Naive thymus-derived CD4-positive, alpha-beta T cell (primary cell): ENCODE measurements at regions of chr5 and their contacts with region 1.

Region 1: DNA sequence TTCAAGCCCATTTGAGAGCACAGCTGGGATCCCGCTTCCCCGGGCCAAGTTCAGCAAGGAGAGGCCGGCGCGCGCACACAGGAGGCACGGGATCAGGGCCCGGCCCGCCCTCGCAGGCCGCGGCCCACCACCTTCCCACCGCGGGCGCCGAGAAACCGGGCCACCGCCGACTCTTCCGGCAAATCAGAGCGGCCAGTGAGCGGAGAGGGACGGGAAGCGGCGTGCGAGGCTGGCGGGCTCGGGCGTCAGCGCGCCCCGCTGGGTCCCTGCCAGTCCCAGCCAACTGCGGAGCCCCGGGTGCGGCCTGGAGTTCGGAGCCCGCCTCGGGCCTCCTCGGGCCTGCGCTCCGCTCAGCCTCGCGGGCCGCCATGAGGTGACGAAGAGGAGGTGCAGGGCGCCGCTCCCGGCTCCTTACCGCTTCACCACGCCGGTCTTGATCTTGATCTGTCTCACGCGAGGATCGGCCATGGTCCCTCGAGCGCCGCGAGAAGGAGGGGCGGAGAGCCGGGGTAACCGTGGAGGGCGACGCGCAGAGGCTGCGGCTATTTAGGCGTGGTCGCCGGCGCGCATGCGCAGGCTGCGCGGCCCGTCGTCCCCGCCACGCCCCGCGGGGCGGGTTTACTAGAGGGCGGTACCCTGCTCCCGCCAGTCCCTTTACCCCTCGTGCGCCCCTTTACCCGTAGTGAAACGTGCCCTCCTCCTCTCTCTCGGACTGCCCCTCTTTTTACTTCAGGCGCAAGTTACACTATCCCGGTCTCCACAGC is at the start of gene TBCA:
- DNase-seq: peak; percentile 87 to 94 (median 93)
- ATAC-seq: peak; percentile 92
- H3K4me3 ChIP-seq: peak within 1 kb of the TSS; percentile 72
- H3K4me3 Mint-ChIP-seq: peak within 1 kb of the TSS; percentile 90 to 99 (median 94)
- H3K27ac ChIP-seq: peak within 1 kb of the TSS; percentile 97
- H3K27ac Mint-ChIP-seq: peak within 1 kb of the TSS; percentile 96 to 98 (median 97)
- H3K4me1 ChIP-seq: peaks cover 13 to 26% of the 10 kb centered on the region in 2 donors
- H3K4me1 Mint-ChIP-seq: peaks cover 32 to 60% (median 49%) of the 10 kb centered on the region in 7 donors
- H3K27me3 ChIP-seq: no peaks in the 10 kb centered on the region
- H3K27me3 Mint-ChIP-seq: no peaks in the 10 kb centered on the region
- total RNA-seq, gene TBCA: 71.3 to 137 (median 89.3) TPM

Region 2: GRCh38 chr5:77155179-77155785 is 620.7 kb before region 1 on chr5:
- CTCF ChIA-PET with region 1: no interaction called
- POLR2A ChIA-PET with region 1: no interaction called
- intact Hi-C with region 1: loop called in 1 of 2 experiments (anchors 10 kb)
- DNase-seq: peak in 7 of 9 donors; percentile 81 to 94 (median 91)
- ATAC-seq: peak; percentile 96
- H3K4me3 ChIP-seq: no peak overlapping the region
- H3K4me3 Mint-ChIP-seq: peak overlapping the region in 9 of 10 donors; percentile 22 to 83 (median 60)
- H3K27ac ChIP-seq: peak overlapping the region; percentile 67
- H3K27ac Mint-ChIP-seq: peak overlapping the region in 8 of 9 donors; percentile 74 to 99 (median 96)
- H3K4me1 ChIP-seq: peaks cover 0 to 27% of the 10 kb centered on the region in 2 donors
- H3K4me1 Mint-ChIP-seq: peaks cover 17 to 40% (median 33%) of the 10 kb centered on the region in 7 donors
- H3K27me3 ChIP-seq: no peaks in the 10 kb centered on the region
- H3K27me3 Mint-ChIP-seq: peaks cover 0 to 12% (median 3%) of the 10 kb centered on the region in 5 donors

Region 3: DNA sequence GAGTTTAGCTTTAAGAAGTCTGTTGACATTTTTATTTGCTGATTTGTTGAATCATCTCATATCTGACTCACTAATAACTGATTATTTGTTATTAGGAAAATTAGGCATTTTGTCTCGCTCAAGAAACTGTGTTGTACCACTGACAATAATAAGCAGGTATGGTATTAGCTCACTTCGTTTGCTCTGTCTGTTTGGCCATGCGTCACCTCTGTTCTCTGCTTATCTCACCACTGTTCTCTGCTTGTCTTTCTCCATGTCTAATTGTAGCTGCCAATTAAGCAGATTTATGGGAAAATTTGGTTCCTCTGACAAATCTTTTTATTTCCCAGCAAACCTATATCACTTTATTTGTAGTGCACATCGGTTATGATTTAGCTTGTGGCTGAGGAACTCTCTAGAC is 422.7 kb before region 1 on chr5:
- CTCF ChIA-PET with region 1: no interaction called
- POLR2A ChIA-PET with region 1: no interaction called
- intact Hi-C with region 1: no loop called
- DNase-seq: no peak
- ATAC-seq: no peak
- H3K4me3 ChIP-seq: no peak overlapping the region
- H3K4me3 Mint-ChIP-seq: no peak overlapping the region
- H3K27ac ChIP-seq: no peak overlapping the region
- H3K27ac Mint-ChIP-seq: no peak overlapping the region
- H3K4me1 ChIP-seq: no peaks in the 10 kb centered on the region
- H3K4me1 Mint-ChIP-seq: peaks cover 0 to 13% (median 0%) of the 10 kb centered on the region in 7 donors
- H3K27me3 ChIP-seq: no peaks in the 10 kb centered on the region
- H3K27me3 Mint-ChIP-seq: peaks cover 0 to 22% (median 0%) of the 10 kb centered on the region in 5 donors

Region 4: GRCh38 chr5:77645158-77645994 is 130.6 kb before region 1 on chr5:
- CTCF ChIA-PET with region 1: no interaction called
- POLR2A ChIA-PET with region 1: no interaction called
- intact Hi-C with region 1: no loop called
- DNase-seq: peak in 2 of 9 donors; percentile 51 to 66
- ATAC-seq: peak; percentile 83
- H3K4me3 ChIP-seq: no peak overlapping the region
- H3K4me3 Mint-ChIP-seq: peak overlapping the region; percentile 45 to 83 (median 72)
- H3K27ac ChIP-seq: no peak overlapping the region
- H3K27ac Mint-ChIP-seq: peak overlapping the region in 1 of 9 donors; percentile 12
- H3K4me1 ChIP-seq: peaks cover 7 to 9% of the 10 kb centered on the region in 2 donors
- H3K4me1 Mint-ChIP-seq: peaks cover 13 to 29% (median 19%) of the 10 kb centered on the region in 7 donors
- H3K27me3 ChIP-seq: peaks cover 17 to 43% of the 10 kb centered on the region in 2 donors
- H3K27me3 Mint-ChIP-seq: peaks cover 92 to 95% (median 94%) of the 10 kb centered on the region in 5 donors

Region 5: DNA sequence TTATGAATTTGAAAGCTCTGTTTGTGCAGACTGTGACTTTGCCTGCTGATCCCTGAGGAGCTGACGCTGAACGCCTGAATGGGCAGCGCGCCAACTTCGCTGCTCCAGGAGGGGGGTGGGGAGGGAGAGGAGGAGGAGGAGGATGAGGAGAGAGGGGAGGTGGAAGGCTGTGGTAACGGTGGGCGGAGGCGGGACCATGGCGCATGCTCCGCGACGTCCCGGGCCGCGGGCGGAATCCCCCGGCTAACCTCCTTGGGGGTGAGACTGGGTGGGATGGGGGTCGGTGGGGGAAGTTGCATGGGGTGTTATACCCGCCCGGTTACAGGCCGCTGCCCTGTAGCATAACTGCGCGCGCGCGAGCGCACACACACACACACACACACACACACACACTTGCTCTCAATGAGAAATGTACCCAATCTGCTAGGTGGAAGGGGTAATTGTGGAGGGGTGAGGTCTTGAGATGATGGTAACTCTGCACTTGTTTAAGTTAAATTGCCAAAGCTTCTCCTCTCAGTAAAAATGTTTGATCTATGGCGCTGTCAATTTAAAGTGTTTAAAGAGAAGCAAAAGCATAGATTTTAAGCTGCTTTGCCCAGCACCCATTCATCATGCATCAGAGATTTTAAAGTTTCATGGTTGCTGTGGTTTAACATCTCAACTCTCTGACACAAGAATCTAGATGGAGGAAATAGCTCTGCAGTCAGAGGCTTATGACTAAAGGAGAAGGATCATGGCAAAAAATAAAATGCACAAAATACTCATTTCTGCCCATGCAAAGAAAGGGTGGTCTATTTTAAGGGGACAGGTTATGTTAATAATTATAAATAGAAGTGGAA is 76.8 kb after region 1 on chr5:
- CTCF ChIA-PET with region 1: no interaction called
- POLR2A ChIA-PET with region 1: no interaction called
- intact Hi-C with region 1: loop called (anchors 5 kb)
- DNase-seq: peak in 8 of 9 donors; percentile 6 to 45 (median 30)
- ATAC-seq: peak; percentile 79
- H3K4me3 ChIP-seq: peak overlapping the region; percentile 42
- H3K4me3 Mint-ChIP-seq: peak overlapping the region; percentile 79 to 92 (median 84)
- H3K27ac ChIP-seq: no peak overlapping the region
- H3K27ac Mint-ChIP-seq: peak overlapping the region in 8 of 9 donors; percentile 2 to 86 (median 48)
- H3K4me1 ChIP-seq: peaks cover 0 to 13% of the 10 kb centered on the region in 2 donors
- H3K4me1 Mint-ChIP-seq: peaks cover 10 to 30% (median 18%) of the 10 kb centered on the region in 7 donors
- H3K27me3 ChIP-seq: no peaks in the 10 kb centered on the region
- H3K27me3 Mint-ChIP-seq: peaks cover 16 to 74% (median 55%) of the 10 kb centered on the region in 5 donors

Region 6: GRCh38 chr5:78359831-78360673 is 584.1 kb after region 1 on chr5 and contains the start of gene SCAMP1:
- CTCF ChIA-PET with region 1: no interaction called
- POLR2A ChIA-PET with region 1: no interaction called
- intact Hi-C with region 1: loop called (anchors 1 kb)
- DNase-seq: peak; percentile 84 to 96 (median 93)
- ATAC-seq: peak; percentile 92
- H3K4me3 ChIP-seq: peak within 1 kb of the TSS; percentile 99
- H3K4me3 Mint-ChIP-seq: peak within 1 kb of the TSS; percentile 89 to 97 (median 94)
- H3K27ac ChIP-seq: peak within 1 kb of the TSS; percentile 85
- H3K27ac Mint-ChIP-seq: peak within 1 kb of the TSS; percentile 71 to 97 (median 96)
- H3K4me1 ChIP-seq: peaks cover 11 to 16% of the 10 kb centered on the region in 2 donors
- H3K4me1 Mint-ChIP-seq: peaks cover 27 to 64% (median 55%) of the 10 kb centered on the region in 7 donors
- H3K27me3 ChIP-seq: no peaks in the 10 kb centered on the region
- H3K27me3 Mint-ChIP-seq: no peaks in the 10 kb centered on the region
- total RNA-seq, gene SCAMP1: 16.9 to 27.6 (median 23.0) TPM